ENCODE measurements at regions of chr1 and their contacts with region 1.

Region 1: DNA sequence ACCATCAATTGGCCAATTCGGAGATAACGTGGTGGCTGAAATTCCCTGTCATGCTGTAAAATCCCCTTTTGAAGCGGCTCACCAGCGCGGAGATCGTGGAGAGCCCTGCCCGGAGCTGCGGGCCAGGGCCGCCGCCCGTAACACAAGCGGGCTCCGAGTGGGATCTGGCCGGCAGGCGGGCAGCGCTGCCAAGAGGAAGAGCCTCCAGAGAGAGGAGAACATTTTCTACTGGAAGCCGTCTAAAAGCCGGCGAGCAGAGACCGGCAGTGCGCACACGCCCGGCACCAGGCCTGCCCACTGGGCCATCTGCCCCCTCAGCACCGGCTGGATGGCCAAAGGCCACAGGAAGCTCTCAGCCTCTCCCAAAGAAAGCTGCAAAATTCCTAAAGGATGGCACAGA is 15.5 kb downstream of the SSBP3 start:
- DNase-seq: no peak
- ATAC-seq: peak; percentile 59
- H3K4me3 ChIP-seq: no peak overlapping the region
- H3K27ac ChIP-seq: no peak overlapping the region
- H3K4me1 ChIP-seq: no peaks in the 10 kb centered on the region
- H3K27me3 ChIP-seq: no peaks in the 10 kb centered on the region

Region 2: GRCh38 chr1:54350360-54350759 is 40.3 kb before region 1 on chr1:
- intact Hi-C with region 1: loop called in 1 of 2 experiments (anchors 5 kb)
- DNase-seq: peak in 1 of 2 donors; percentile 4
- ATAC-seq: no peak
- H3K4me3 ChIP-seq: no peak overlapping the region
- H3K27ac ChIP-seq: no peak overlapping the region
- H3K4me1 ChIP-seq: no peaks in the 10 kb centered on the region
- H3K27me3 ChIP-seq: no peaks in the 10 kb centered on the region

Region 3: GRCh38 chr1:54421101-54421504 is 30.4 kb after region 1 on chr1:
- intact Hi-C with region 1: no loop called
- DNase-seq: no peak
- ATAC-seq: no peak
- H3K4me3 ChIP-seq: no peak overlapping the region
- H3K27ac ChIP-seq: no peak overlapping the region
- H3K4me1 ChIP-seq: no peaks in the 10 kb centered on the region
- H3K27me3 ChIP-seq: no peaks in the 10 kb centered on the region

Measured in aorta (tissue), 5 donors.